Activated T-helper 1 cell treated with anti-CD3 and anti-CD28 coated beads, Interleukin-12 subunit alpha, Interleukin-12 subunit beta, Interleukin-2, Interleukin-4 antibody, amounts not matched to agents 30 ng/mL and 10 ng/mL and 1 ng/mL, durations not matched to agents 14 hours and 24 hours and 36 hours (primary cell): ENCODE measurements at regions of chr17 and their contacts with region 1.

Region 1: DNA sequence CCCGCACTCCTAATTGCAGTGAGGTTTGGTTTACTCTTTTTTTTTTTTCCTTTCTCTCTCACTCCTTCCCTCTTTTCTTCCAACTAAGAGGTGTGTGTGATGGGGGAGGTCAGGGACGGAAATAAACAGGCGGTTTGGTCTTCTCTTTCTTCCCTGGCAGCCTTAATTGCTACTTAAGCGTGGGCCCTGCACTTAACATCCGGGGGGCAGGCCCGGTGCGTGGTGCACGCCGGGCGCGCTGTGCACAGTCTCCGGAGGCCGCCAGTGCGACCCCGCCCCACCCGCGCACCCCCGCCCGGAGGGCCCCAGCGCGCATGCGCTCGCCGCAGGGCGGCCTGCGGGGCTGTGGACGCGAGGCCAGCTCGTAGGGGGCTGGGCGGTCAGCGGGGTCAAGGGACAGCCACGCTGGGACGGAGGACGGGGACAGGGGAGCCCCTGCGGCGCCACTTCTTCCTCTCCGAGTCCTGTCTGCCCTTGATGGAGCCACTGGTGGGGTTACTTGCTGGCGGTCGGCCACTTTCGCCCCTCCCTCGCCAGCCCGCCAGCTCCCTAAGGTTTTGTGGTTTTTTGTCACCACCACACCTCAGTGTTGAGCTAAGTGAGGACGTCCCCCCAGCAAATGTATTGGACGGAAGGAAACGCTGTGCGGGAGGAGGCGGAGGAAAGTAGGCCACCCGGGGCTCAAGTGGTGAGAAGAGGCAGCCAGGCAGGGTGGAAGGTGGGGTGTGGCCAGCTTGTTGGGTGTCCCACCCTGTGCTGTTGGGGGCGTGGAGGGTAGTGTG is 120.9 kb downstream of the MRM1 start:
- DNase-seq: peak; percentile 83
- H3K4me3 Mint-ChIP-seq: peak overlapping the region; percentile 79
- H3K27ac Mint-ChIP-seq: peak overlapping the region; percentile 95
- H3K4me1 Mint-ChIP-seq: peaks cover 56% of the 10 kb centered on the region
- H3K27me3 Mint-ChIP-seq: peaks cover 5% of the 10 kb centered on the region

Region 2: DNA sequence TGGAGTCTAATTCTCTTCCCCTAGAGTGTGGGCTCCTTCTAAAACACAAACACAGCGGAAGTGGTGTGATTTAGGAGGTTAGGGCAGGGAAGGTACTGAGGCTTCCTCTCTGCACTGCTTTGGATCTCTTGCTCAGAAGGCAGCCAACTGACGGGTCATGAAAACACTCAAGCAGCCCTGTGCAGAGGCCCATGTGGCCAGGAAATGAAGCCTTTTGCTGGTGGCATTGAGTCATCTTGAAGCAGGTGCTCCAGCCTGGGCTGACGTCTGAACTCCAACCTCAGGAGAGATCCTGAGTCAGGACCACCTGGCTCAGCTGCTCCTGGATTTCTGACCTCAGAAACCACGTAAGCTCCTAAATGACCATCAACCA is 48.0 kb before region 1 on chr17:
- intact Hi-C with region 1: loop called (anchors 1 kb)
- DNase-seq: peak; percentile 63
- H3K4me3 Mint-ChIP-seq: peak overlapping the region; percentile 34
- H3K27ac Mint-ChIP-seq: peak overlapping the region; percentile 96
- H3K4me1 Mint-ChIP-seq: peaks cover 46% of the 10 kb centered on the region
- H3K27me3 Mint-ChIP-seq: no peaks in the 10 kb centered on the region

Region 3: GRCh38 chr17:36824678-36825091 is 102.4 kb after region 1 on chr17:
- intact Hi-C with region 1: no loop called
- DNase-seq: no peak
- H3K4me3 Mint-ChIP-seq: no peak overlapping the region
- H3K27ac Mint-ChIP-seq: no peak overlapping the region
- H3K4me1 Mint-ChIP-seq: no peaks in the 10 kb centered on the region
- H3K27me3 Mint-ChIP-seq: peaks cover 25% of the 10 kb centered on the region

Region 4: GRCh38 chr17:36835036-36835435 is 112.7 kb after region 1 on chr17:
- intact Hi-C with region 1: no loop called
- DNase-seq: no peak
- H3K4me3 Mint-ChIP-seq: no peak overlapping the region
- H3K27ac Mint-ChIP-seq: no peak overlapping the region
- H3K4me1 Mint-ChIP-seq: no peaks in the 10 kb centered on the region
- H3K27me3 Mint-ChIP-seq: peaks cover 15% of the 10 kb centered on the region

Region 5: DNA sequence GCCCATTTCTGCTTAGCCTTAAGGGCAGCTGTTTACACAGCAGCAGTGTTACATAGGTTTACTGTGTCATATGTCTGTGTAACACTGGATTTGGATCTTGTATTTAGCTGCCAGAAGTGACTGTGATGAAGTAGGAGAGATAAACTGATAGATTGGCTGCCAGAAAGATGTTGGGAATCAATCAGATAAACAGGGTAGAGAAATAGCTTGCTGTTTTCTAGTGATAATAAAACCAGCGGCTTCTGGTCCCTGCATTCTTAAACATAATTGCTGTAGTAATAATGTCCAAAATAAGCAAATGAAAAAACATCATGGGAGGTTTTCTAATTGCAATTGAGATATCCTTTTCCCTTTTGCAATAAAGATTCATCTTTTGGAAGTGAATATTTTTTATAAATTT is 295.1 kb after region 1 on chr17:
- intact Hi-C with region 1: no loop called
- DNase-seq: no peak
- H3K4me3 Mint-ChIP-seq: no peak overlapping the region
- H3K27ac Mint-ChIP-seq: no peak overlapping the region
- H3K4me1 Mint-ChIP-seq: no peaks in the 10 kb centered on the region
- H3K27me3 Mint-ChIP-seq: no peaks in the 10 kb centered on the region